ENCODE measurements at regions of chr11 and their contacts with region 1.

Region 1: GRCh38 chr11:121716060-121716459 is 263.3 kb upstream of the SORL1-AS1 start:
- DNase-seq: no peak
- ATAC-seq: no peak
- H3K4me3 ChIP-seq: no peak overlapping the region
- H3K27ac ChIP-seq: no peak overlapping the region
- H3K4me1 ChIP-seq: no peaks in the 10 kb centered on the region
- H3K27me3 ChIP-seq: no peaks in the 10 kb centered on the region
- CTCF ChIP-seq: no peak

Region 2: DNA sequence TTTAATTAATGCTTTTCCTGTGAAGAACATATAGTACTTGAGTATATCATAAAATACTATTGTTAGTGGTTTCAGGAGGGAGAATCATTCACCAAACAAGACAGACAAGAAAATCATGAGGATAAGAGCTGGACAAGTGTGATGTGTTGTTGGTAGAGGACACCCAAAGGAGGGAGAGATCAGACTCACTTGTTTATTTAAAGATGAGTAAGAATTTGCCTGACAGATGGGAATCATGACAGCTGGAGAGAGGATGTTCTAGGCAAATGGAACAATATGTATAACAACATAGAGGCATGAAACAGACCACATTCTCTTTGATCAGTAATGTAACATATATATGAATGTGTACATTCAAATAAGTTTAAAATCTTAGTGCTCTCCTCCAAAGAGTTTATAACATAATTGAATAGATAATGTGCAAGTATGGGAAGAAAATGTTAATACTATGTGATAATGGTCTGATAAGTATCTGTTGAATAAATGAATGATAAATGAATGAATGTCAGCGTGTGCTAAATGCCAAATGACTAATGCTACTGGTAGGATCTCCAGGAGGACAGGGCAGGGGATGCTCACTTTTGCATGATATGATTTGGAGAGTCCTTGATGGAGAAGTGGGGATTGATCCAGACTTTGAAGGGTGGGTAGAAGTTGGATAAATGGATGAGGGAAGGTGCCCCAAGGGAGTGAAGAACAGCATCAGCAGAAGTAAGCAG is 34.4 kb before region 1 on chr11:
- CTCF ChIA-PET with region 1: no interaction called
- POLR2A ChIA-PET with region 1: no interaction called
- intact Hi-C with region 1: loop called (anchors 5 kb)
- DNase-seq: peak; percentile 57
- ATAC-seq: peak; percentile 94
- H3K4me3 ChIP-seq: no peak overlapping the region
- H3K27ac ChIP-seq: no peak overlapping the region
- H3K4me1 ChIP-seq: peaks cover 12% of the 10 kb centered on the region
- H3K27me3 ChIP-seq: no peaks in the 10 kb centered on the region
- CTCF ChIP-seq: no peak

Region 3: DNA sequence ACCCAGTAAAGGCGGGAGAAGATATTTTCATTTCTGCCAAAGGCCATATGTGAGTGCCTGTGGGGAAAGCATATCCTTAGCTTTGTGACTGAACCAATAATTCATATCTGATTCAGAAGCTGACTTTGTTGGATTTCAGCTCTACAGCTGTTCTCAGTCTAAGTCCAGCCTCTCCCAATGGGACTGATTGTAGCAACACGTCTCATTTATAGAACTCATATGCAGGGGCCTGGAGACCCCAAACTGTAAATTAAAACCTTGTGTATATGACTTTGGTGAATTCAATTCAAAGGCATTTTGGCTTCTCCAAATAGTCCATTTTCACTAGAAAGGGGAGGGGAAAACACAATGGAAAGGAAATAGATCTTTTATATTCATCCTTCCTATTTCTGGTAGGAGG is 12.9 kb before region 1 on chr11:
- CTCF ChIA-PET with region 1: no interaction called
- POLR2A ChIA-PET with region 1: no interaction called
- intact Hi-C with region 1: no loop called
- DNase-seq: no peak
- ATAC-seq: no peak
- H3K4me3 ChIP-seq: no peak overlapping the region
- H3K27ac ChIP-seq: no peak overlapping the region
- H3K4me1 ChIP-seq: no peaks in the 10 kb centered on the region
- H3K27me3 ChIP-seq: peaks cover 33% of the 10 kb centered on the region; the same call in 1 of the 2 replicates
- CTCF ChIP-seq: no peak